HepG2 (cell line): ENCODE measurements at regions of chr15 and their contacts with region 1.

Region 1: GRCh38 chr15:83248151-83249029 is 36.1 kb downstream of the BNC1 start:
- DNase-seq: peak; percentile 55
- ATAC-seq: peak; percentile 69
- H3K4me3 ChIP-seq: no peak overlapping the region
- H3K27ac ChIP-seq: no peak overlapping the region
- H3K4me1 ChIP-seq: no peaks in the 10 kb centered on the region
- H3K27me3 ChIP-seq: peaks cover 0 to 5% of the 10 kb centered on the region in 2 experiments; a peak in 2 of 5 replicates
- CTCF ChIP-seq: peak; percentile 70
- EP300 ChIP-seq: no peak
- POLR2A ChIP-seq: no peak
- RAD21 ChIP-seq: peak; percentile 55; the same call in 1 of the 2 replicates

Region 2: GRCh38 chr15:83270176-83270575 is 21.8 kb after region 1 on chr15:
- CTCF ChIA-PET with region 1: no interaction called
- POLR2A ChIA-PET with region 1: no interaction called
- in situ Hi-C with region 1: no loop called
- intact Hi-C with region 1: no loop called
- DNase-seq: no peak
- ATAC-seq: no peak
- H3K4me3 ChIP-seq: no peak overlapping the region
- H3K27ac ChIP-seq: no peak overlapping the region
- H3K4me1 ChIP-seq: no peaks in the 10 kb centered on the region
- H3K27me3 ChIP-seq: no peaks in the 10 kb centered on the region; a peak in 2 of 5 replicates
- CTCF ChIP-seq: no peak
- EP300 ChIP-seq: no peak
- POLR2A ChIP-seq: no peak
- RAD21 ChIP-seq: no peak

Region 3: GRCh38 chr15:83372420-83372891 is 124.1 kb after region 1 on chr15:
- CTCF ChIA-PET with region 1: no interaction called
- POLR2A ChIA-PET with region 1: no interaction called
- in situ Hi-C with region 1: loop called (anchors 10 kb)
- intact Hi-C with region 1: no loop called
- DNase-seq: no peak
- ATAC-seq: no peak
- H3K4me3 ChIP-seq: no peak overlapping the region
- H3K27ac ChIP-seq: no peak overlapping the region
- H3K4me1 ChIP-seq: no peaks in the 10 kb centered on the region
- H3K27me3 ChIP-seq: peaks cover 0 to 29% of the 10 kb centered on the region in 2 experiments; a peak in 3 of 5 replicates
- CTCF ChIP-seq: no peak
- EP300 ChIP-seq: no peak
- POLR2A ChIP-seq: no peak
- RAD21 ChIP-seq: no peak

Region 4: DNA sequence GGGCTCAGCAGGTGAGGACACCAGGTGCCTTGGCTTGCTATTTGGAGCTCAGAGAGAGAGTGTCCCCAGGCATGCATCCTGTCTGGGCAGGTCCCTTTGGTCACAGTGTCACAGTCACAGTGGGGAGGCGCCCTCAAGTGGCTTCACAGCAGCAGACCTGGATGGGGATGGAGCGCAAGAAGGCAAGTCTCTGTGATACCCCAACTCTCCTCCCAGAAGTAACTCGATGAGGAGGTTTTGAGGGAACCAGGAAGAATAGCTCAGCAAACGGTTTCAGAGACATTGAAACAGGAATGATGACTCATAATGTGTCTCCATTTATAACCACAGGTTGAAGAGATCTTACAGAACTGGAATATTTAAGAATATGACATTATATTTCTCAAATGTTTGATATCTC is 132.3 kb after region 1 on chr15:
- CTCF ChIA-PET with region 1: interaction called, 4 read pairs
- POLR2A ChIA-PET with region 1: no interaction called
- in situ Hi-C with region 1: loop called (anchors 10 kb)
- intact Hi-C with region 1: loop called (anchors 2 kb)
- DNase-seq: peak; percentile 37
- ATAC-seq: peak; percentile 97
- H3K4me3 ChIP-seq: no peak overlapping the region
- H3K27ac ChIP-seq: no peak overlapping the region
- H3K4me1 ChIP-seq: no peaks in the 10 kb centered on the region
- H3K27me3 ChIP-seq: peaks cover 0 to 20% of the 10 kb centered on the region in 2 experiments; a peak in 3 of 5 replicates
- CTCF ChIP-seq: peak; percentile 74
- EP300 ChIP-seq: no peak
- POLR2A ChIP-seq: no peak
- RAD21 ChIP-seq: no peak

Region 5: GRCh38 chr15:83436458-83437158 is 188.2 kb after region 1 on chr15:
- CTCF ChIA-PET with region 1: interaction called, 4 read pairs
- POLR2A ChIA-PET with region 1: no interaction called
- in situ Hi-C with region 1: no loop called
- intact Hi-C with region 1: loop called (anchors 5 kb)
- DNase-seq: peak; percentile 7
- ATAC-seq: peak; percentile 77
- H3K4me3 ChIP-seq: no peak overlapping the region
- H3K27ac ChIP-seq: no peak overlapping the region
- H3K4me1 ChIP-seq: no peaks in the 10 kb centered on the region
- H3K27me3 ChIP-seq: peaks cover 1 to 12% of the 10 kb centered on the region in 2 experiments; a peak in 1 of 5 replicates
- CTCF ChIP-seq: peak; percentile 38
- EP300 ChIP-seq: no peak
- POLR2A ChIP-seq: no peak
- RAD21 ChIP-seq: no peak

Region 6: GRCh38 chr15:83559310-83559966 is 311.0 kb after region 1 on chr15:
- CTCF ChIA-PET with region 1: interaction called, 9 read pairs
- POLR2A ChIA-PET with region 1: no interaction called
- in situ Hi-C with region 1: loop called (anchors 5 kb)
- intact Hi-C with region 1: loop called (anchors 1 kb)
- DNase-seq: peak; percentile 48
- ATAC-seq: peak; percentile 79
- H3K4me3 ChIP-seq: no peak overlapping the region
- H3K27ac ChIP-seq: no peak overlapping the region
- H3K4me1 ChIP-seq: no peaks in the 10 kb centered on the region
- H3K27me3 ChIP-seq: peaks cover 0 to 8% of the 10 kb centered on the region in 2 experiments; a peak in 2 of 5 replicates
- CTCF ChIP-seq: peak; percentile 83
- EP300 ChIP-seq: no peak
- POLR2A ChIP-seq: no peak
- RAD21 ChIP-seq: peak; percentile 33